ENCODE measurements at regions of chr17 and their contacts with region 1.

Region 1: DNA sequence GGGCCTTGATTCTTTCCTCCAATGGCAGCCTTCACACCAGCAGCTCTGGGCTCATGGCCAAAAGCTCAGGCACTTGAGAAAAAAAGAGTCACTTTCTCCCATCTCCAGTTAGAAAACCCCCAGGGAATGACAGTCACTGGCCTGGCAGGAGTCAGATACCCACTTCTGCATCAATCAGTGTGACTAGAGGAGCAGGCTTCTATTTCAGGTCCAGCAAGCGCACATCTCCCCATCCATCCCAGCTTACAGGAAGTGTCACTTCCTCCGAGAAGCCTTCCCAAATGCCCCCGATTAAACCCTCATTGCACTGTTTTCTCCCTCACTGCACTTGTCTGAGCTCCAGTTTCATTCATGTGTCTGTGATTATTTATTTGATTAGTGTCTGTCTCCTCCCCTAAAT is 30.4 kb upstream of the CCL1 start:
- DNase-seq: no peak
- ATAC-seq: no peak
- H3K4me3 Mint-ChIP-seq: no peak overlapping the region
- H3K27ac Mint-ChIP-seq: no peak overlapping the region
- H3K4me1 Mint-ChIP-seq: peaks cover 40% of the 10 kb centered on the region
- H3K27me3 Mint-ChIP-seq: peaks cover 8% of the 10 kb centered on the region

Region 2: GRCh38 chr17:33927732-33928133 is 465.7 kb before region 1 on chr17:
- CTCF ChIA-PET with region 1: no interaction called
- DNase-seq: no peak
- ATAC-seq: no peak
- H3K4me3 Mint-ChIP-seq: no peak overlapping the region
- H3K27ac Mint-ChIP-seq: no peak overlapping the region
- H3K4me1 Mint-ChIP-seq: no peaks in the 10 kb centered on the region
- H3K27me3 Mint-ChIP-seq: no peaks in the 10 kb centered on the region

Region 3: GRCh38 chr17:34378664-34379101 is 14.7 kb before region 1 on chr17:
- CTCF ChIA-PET with region 1: interaction called, 99 read pairs
- DNase-seq: peak; percentile 72
- ATAC-seq: peak; percentile 80
- H3K4me3 Mint-ChIP-seq: peak overlapping the region; percentile 63
- H3K27ac Mint-ChIP-seq: peak overlapping the region; percentile 85
- H3K4me1 Mint-ChIP-seq: peaks cover 68% of the 10 kb centered on the region
- H3K27me3 Mint-ChIP-seq: peaks cover 3% of the 10 kb centered on the region

Region 4: DNA sequence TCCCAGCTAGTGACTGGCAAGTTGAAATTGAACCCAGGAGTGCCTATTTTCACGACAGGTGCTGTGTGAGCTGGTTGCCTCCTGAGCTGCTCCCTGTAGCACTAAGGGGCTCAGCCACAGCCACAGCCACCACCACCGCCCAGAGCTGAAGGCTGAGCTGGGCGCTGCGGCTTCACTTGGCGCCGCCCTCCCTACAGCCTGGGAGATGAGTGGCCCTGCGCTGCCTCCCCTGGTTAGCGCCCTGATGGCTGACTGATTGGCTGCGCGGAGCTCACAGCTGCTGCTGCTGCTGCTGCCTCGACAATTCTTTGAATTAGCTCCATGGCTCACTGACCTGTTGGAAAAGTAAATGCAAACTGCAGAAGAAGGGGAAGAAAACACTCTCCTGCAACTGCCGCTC is 94.2 kb after region 1 on chr17:
- CTCF ChIA-PET with region 1: no interaction called
- DNase-seq: no peak
- ATAC-seq: no peak
- H3K4me3 Mint-ChIP-seq: no peak overlapping the region
- H3K27ac Mint-ChIP-seq: no peak overlapping the region
- H3K4me1 Mint-ChIP-seq: peaks cover 8% of the 10 kb centered on the region
- H3K27me3 Mint-ChIP-seq: peaks cover 62% of the 10 kb centered on the region

Measured in activated CD8-positive, alpha-beta memory T cell treated with anti-CD3 and anti-CD28 coated beads, Interleukin-2, amount 10 ng/mL, durations not matched to agents 7 days and 5 days (primary cell).